ENCODE measurements at regions of chr6 and their contacts with region 1.

Region 1: DNA sequence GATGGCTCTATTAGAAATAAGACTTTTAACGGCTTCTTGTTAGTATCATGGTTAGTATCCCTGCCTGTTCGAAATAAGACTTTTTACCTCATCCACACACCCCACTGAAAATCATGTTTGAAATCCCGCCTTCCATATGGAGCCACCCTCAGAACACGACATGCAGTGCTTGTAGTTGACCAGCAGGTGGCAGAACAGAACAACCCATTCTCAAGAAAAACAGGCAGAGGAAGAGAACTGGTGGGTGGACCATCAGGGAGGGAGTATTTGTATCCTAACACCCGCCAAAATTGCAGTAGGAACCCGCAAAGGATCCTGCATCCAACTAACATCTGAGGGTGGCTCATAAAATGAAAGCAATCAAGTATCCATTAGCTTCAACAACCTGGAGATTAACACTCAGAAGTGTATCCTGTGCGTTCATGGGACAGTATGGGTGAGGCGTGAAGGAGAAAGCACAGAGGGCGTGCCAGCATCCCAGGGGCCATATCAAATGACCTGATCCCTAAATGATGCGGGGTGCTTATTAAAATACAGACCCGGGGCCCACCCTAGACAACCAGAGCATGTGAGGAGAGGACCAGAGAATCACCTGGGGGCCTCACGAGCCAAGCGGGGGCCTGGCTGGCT is 89.6 kb upstream of the NHSL1 start:
- DNase-seq: peak; percentile 80 to 82 (median 82)
- ATAC-seq: peak; percentile 89
- H3K4me3 ChIP-seq: no peak overlapping the region
- H3K27ac ChIP-seq: no peak overlapping the region
- H3K4me1 ChIP-seq: no peaks in the 10 kb centered on the region
- H3K27me3 ChIP-seq: peaks cover 14 to 34% of the 10 kb centered on the region in 2 experiments; a peak in 4 of 5 replicates
- CTCF ChIP-seq: peak; percentile 88 to 95 (median 93)
- EP300 ChIP-seq: no peak
- POLR2A ChIP-seq: no peak
- RAD21 ChIP-seq: peak; percentile 82 to 88

Region 2: DNA sequence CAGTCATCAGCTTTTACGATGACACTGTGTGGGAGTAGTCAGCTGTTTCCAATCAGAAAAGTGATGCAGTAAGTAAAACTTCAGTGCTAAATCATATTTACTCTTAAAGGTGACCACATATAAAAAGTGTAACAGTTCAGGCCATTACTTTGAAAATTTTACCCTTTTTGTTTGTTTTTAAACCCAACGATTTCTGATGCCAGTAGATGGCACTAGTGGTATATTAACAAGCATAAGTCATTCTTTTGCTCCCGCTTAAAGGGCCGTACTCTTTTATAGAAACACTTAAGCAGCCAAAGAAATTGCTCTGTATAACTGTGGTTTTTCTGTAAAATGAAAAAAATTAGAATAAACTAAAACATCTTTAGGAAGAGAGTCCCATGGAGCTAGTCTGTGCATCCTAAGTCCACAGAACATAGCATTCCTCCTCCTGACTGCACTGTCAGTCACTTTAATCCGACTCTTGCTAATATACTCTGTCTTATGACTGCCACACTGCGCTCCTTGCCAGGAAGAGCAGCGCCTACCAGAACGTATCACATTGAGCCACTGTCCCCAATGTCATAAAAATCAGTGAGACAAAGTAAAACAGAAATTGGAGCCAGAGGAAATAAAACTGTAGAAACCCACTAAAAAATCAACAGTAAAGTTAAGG is 159.8 kb before region 1 on chr6:
- CTCF ChIA-PET with region 1: no interaction called
- POLR2A ChIA-PET with region 1: no interaction called
- in situ Hi-C with region 1: no loop called
- intact Hi-C with region 1: loop called (anchors 1 kb)
- DNase-seq: peak; percentile 33 to 46 (median 40)
- ATAC-seq: peak; percentile 73
- H3K4me3 ChIP-seq: no peak overlapping the region
- H3K27ac ChIP-seq: no peak overlapping the region
- H3K4me1 ChIP-seq: peaks cover 0 to 7% of the 10 kb centered on the region in 2 experiments; a peak in 1 of 5 replicates
- H3K27me3 ChIP-seq: peaks cover 56 to 62% of the 10 kb centered on the region in 2 experiments
- CTCF ChIP-seq: peak; percentile 45 to 82 (median 45); a peak in 4 of 6 replicates
- EP300 ChIP-seq: no peak
- POLR2A ChIP-seq: no peak
- RAD21 ChIP-seq: peak; percentile 74 to 79

Region 3: GRCh38 chr6:138440758-138441357 is 148.1 kb before region 1 on chr6:
- CTCF ChIA-PET with region 1: no interaction called
- POLR2A ChIA-PET with region 1: no interaction called
- in situ Hi-C with region 1: no loop called
- intact Hi-C with region 1: no loop called
- DNase-seq: no peak
- ATAC-seq: no peak
- H3K4me3 ChIP-seq: no peak overlapping the region
- H3K27ac ChIP-seq: no peak overlapping the region
- H3K4me1 ChIP-seq: no peaks in the 10 kb centered on the region
- H3K27me3 ChIP-seq: peaks cover 3 to 8% of the 10 kb centered on the region in 2 experiments; a peak in 2 of 5 replicates
- CTCF ChIP-seq: no peak
- EP300 ChIP-seq: no peak
- POLR2A ChIP-seq: no peak
- RAD21 ChIP-seq: no peak

Region 4: GRCh38 chr6:138577151-138577915 is 11.6 kb before region 1 on chr6:
- CTCF ChIA-PET with region 1: no interaction called
- POLR2A ChIA-PET with region 1: no interaction called
- in situ Hi-C with region 1: no loop called
- intact Hi-C with region 1: no loop called
- DNase-seq: no peak
- ATAC-seq: no peak; the same call in 2 of the 3 replicates
- H3K4me3 ChIP-seq: no peak overlapping the region
- H3K27ac ChIP-seq: no peak overlapping the region
- H3K4me1 ChIP-seq: no peaks in the 10 kb centered on the region
- H3K27me3 ChIP-seq: peaks cover 39 to 49% of the 10 kb centered on the region in 2 experiments
- CTCF ChIP-seq: no peak
- EP300 ChIP-seq: no peak
- POLR2A ChIP-seq: no peak
- RAD21 ChIP-seq: no peak

Region 5: GRCh38 chr6:138765896-138766655 is 177.2 kb after region 1 on chr6:
- CTCF ChIA-PET with region 1: interaction called, 52 read pairs
- POLR2A ChIA-PET with region 1: no interaction called
- in situ Hi-C with region 1: loop called (anchors 5 kb)
- intact Hi-C with region 1: loop called (anchors 1 kb)
- DNase-seq: peak; percentile 30 to 63 (median 55)
- ATAC-seq: peak; percentile 57; the same call in 1 of the 3 replicates
- H3K4me3 ChIP-seq: no peak overlapping the region
- H3K27ac ChIP-seq: no peak overlapping the region
- H3K4me1 ChIP-seq: no peaks in the 10 kb centered on the region; a peak in 1 of 5 replicates
- H3K27me3 ChIP-seq: peaks cover 0 to 7% of the 10 kb centered on the region in 2 experiments; a peak in 2 of 5 replicates
- CTCF ChIP-seq: peak in 2 of 3 experiments; percentile 49 to 78; a peak in 4 of 6 replicates
- EP300 ChIP-seq: no peak
- POLR2A ChIP-seq: no peak
- RAD21 ChIP-seq: peak; percentile 74 to 82

Region 6: DNA sequence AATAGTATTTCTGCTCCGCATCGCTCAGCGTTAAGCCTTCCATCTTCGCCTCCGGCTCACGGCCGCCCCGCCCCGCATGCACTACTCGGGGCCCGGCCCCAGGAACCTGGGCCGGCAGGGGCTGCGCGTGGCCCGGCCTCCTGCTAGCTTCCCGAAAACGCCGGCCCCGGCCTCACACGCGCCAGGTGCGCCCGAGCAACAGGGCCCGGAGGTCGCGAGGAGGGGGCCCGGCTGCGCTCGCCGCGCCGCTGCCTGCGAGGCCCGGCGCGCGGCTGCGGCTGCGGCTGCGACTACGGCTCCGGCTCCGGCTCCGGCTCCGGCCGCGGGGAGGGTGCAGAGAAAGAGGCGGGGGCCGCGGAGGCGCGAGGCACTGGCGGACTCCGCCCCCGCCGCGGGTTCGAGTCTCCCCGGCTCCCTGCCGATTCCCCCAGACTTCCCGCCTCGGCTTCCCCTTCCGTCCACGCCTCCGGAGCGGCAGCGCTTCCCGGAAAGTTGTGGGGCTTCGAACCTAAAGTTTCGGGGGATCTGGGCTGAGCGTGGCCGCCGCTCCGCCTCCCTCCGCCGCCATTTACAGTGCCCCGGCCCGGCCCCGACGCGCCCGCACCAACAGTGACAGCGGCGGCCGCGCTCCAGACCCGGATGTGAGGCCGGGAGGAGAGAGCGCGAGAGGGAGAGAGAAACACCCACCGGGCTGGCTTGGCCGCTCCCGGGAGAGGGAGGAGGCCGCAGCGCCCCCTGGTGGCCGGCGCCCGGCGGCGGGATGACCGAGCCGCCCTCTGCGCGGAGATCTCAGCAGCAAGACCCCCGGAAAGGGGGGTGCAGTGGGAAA is 398.9 kb after region 1 on chr6 and contains the start of gene REPS1:
- CTCF ChIA-PET with region 1: no interaction called
- POLR2A ChIA-PET with region 1: no interaction called
- in situ Hi-C with region 1: no loop called
- intact Hi-C with region 1: loop called (anchors 5 kb)
- DNase-seq: peak; percentile 94 to 97 (median 96)
- ATAC-seq: peak; percentile 98
- H3K4me3 ChIP-seq: peak within 1 kb of the TSS; percentile 86
- H3K27ac ChIP-seq: peak within 1 kb of the TSS; percentile 86
- H3K4me1 ChIP-seq: peaks cover 17 to 22% of the 10 kb centered on the region in 2 experiments
- H3K27me3 ChIP-seq: peaks cover 3 to 27% of the 10 kb centered on the region in 2 experiments; a peak in 3 of 5 replicates
- CTCF ChIP-seq: peak; percentile 89 to 95 (median 91)
- EP300 ChIP-seq: no peak; the same call in 1 of the 2 replicates
- POLR2A ChIP-seq: peak; percentile 92
- RAD21 ChIP-seq: peak; percentile 85 to 88
- polyA plus RNA-seq, gene REPS1: 7.9 to 11.4 TPM

Region 7: GRCh38 chr6:139369568-139370282 is 780.8 kb after region 1 on chr6:
- CTCF ChIA-PET with region 1: interaction called, 12 read pairs
- POLR2A ChIA-PET with region 1: no interaction called
- in situ Hi-C with region 1: loop called (anchors 5 kb)
- intact Hi-C with region 1: loop called (anchors 1 kb)
- DNase-seq: peak in 2 of 4 experiments; percentile 59 to 64
- ATAC-seq: no peak
- H3K4me3 ChIP-seq: no peak overlapping the region
- H3K27ac ChIP-seq: peak overlapping the region; percentile 5; the same call in 2 of the 3 replicates
- H3K4me1 ChIP-seq: peaks cover 18 to 24% of the 10 kb centered on the region in 2 experiments
- H3K27me3 ChIP-seq: no peaks in the 10 kb centered on the region
- CTCF ChIP-seq: peak; percentile 66 to 87 (median 76)
- EP300 ChIP-seq: no peak
- POLR2A ChIP-seq: no peak
- RAD21 ChIP-seq: peak; percentile 94 to 97

Measured in K562 (cell line).